Transverse colon (tissue), 4 donors: ENCODE measurements at regions of chr12 and their contacts with region 1.

Region 1: GRCh38 chr12:89542912-89543592 is 17.2 kb upstream of the POC1B start:
- DNase-seq: peak; percentile 77
- H3K4me3 ChIP-seq: no peak overlapping the region
- H3K27ac ChIP-seq: no peak overlapping the region
- H3K4me1 ChIP-seq: peaks cover 0 to 17% (median 10%) of the 10 kb centered on the region in 4 donors
- H3K27me3 ChIP-seq: no peaks in the 10 kb centered on the region
- CTCF ChIP-seq: peak; percentile 81 to 92 (median 85)
- EP300 ChIP-seq: no peak
- POLR2A ChIP-seq: no peak

Region 2: GRCh38 chr12:89960011-89960507 is 417.0 kb after region 1 on chr12:
- in situ Hi-C with region 1: loop called in 1 of 4 experiments (anchors 10 kb)
- intact Hi-C with region 1: no loop called
- DNase-seq: no peak
- H3K4me3 ChIP-seq: no peak overlapping the region
- H3K27ac ChIP-seq: peak overlapping the region; percentile 39 to 77 (median 64)
- H3K4me1 ChIP-seq: peaks cover 0 to 57% (median 33%) of the 10 kb centered on the region in 4 donors
- H3K27me3 ChIP-seq: no peaks in the 10 kb centered on the region
- CTCF ChIP-seq: no peak
- EP300 ChIP-seq: no peak
- POLR2A ChIP-seq: no peak

Region 3: GRCh38 chr12:90102957-90103652 is 560.1 kb after region 1 on chr12:
- in situ Hi-C with region 1: loop called in 2 of 4 experiments (anchors 10 kb)
- intact Hi-C with region 1: no loop called
- DNase-seq: peak; percentile 13
- H3K4me3 ChIP-seq: no peak overlapping the region
- H3K27ac ChIP-seq: no peak overlapping the region
- H3K4me1 ChIP-seq: no peaks in the 10 kb centered on the region
- H3K27me3 ChIP-seq: no peaks in the 10 kb centered on the region
- CTCF ChIP-seq: peak; percentile 41 to 54 (median 48)
- EP300 ChIP-seq: no peak
- POLR2A ChIP-seq: no peak